Astrocyte of the cerebellum (primary cell): ENCODE measurements at regions of chr20 and their contacts with region 1.

Region 1: DNA sequence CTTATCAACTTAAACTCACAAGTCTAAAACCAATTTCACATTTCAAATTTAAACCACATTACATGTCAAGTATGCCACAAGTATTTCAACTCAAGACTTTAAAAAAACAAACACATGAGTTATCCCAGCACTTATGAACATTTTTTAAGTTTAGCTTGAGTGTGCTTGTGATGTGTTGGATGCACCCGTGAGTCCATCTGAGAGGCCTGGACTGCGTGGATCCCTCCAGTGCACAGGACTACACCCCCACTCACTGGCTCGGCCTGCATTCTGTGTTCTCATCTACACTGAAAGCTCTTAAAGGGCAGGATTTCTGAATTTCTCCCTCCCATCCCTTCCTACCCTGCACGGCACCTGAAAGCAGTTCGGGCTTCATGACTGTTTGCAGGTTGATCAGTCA is 128.8 kb upstream of the CD93 start:
- DNase-seq: no peak
- H3K4me3 ChIP-seq: no peak overlapping the region
- CTCF ChIP-seq: no peak

Region 2: DNA sequence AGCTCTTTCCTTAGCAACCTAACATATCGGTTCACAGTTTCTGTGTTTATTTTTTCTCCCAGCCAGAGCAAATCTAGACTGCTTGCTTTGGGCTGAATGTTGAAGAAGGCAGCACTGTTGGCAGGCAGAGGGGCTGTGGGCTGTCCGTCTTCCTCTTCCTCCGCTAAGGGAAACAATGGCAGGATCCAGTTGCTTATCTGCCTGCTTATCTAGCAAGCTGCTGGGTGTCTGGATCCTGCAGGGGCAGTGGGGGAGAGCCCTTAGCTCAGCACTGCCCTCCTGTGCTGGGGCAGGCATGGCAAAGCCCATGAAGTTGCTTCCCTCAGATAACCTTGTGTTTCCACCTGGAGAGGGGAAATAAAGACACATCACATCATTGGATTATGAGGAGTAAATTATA is 36.1 kb before region 1 on chr20:
- in situ Hi-C with region 1: loop called (anchors 5 kb)
- DNase-seq: no peak
- H3K4me3 ChIP-seq: no peak overlapping the region
- CTCF ChIP-seq: no peak

Region 3: GRCh38 chr20:23320317-23320716 is 105.4 kb after region 1 on chr20:
- in situ Hi-C with region 1: no loop called
- DNase-seq: no peak
- H3K4me3 ChIP-seq: no peak overlapping the region
- CTCF ChIP-seq: peak; percentile 48